GM13976 (cell line): ENCODE measurements at regions of chr2 and their contacts with region 1.

Region 1: GRCh38 chr2:54723131-54723995 is at the start of gene EML6:
- DNase-seq: peak; percentile 99
- CTCF ChIP-seq: no peak

Region 2: GRCh38 chr2:54115284-54116137 is 607.9 kb before region 1 on chr2 and contains the start of gene ACYP2:
- in situ Hi-C with region 1: loop called (anchors 25 kb)
- DNase-seq: peak; percentile 91
- CTCF ChIP-seq: no peak

Region 3: GRCh38 chr2:55050133-55050994 is 327.0 kb after region 1 on chr2 and contains the start of gene RTN4:
- in situ Hi-C with region 1: no loop called
- DNase-seq: peak; percentile 96
- CTCF ChIP-seq: peak; percentile 6